ENCODE measurements at regions of chr6 and their contacts with region 1.

Region 1: DNA sequence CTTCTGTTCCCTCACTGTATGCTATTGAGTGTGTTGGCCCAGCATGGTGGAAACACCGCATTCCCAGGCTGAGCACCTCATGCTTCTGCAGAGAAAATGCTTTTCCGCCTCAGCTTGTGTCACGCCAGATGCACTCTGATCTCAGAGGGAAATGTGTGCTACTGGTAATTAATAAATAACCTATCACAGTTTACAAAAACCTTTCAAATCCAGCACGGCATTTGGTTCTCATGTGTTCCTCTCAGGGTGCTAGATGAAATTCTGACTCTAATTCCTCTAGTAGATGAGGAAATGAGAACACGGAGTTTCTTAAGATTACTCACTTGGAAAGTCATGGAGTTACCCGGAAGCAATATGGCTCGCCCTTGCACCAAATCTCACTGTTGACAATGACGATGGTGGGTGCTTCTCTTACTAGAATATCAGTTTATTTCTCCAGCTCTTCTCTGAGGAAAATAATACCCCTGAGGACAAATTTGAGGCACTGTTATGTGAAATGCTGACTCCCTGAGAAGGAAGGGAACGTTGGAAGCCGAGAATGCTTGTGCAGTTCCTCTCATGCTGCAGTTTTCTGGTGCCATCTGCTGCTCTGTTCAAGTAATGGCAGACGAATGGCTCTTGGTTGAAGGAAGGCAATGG is 116.6 kb downstream of the RNF144B start:
- DNase-seq: peak in 24 of 35 experiments; percentile 1 to 64 (median 11)
- ATAC-seq: peak in 1 of 4 experiments; percentile 43
- H3K4me3 ChIP-seq: no peak overlapping the region
- H3K4me3 Mint-ChIP-seq: no peak overlapping the region
- H3K27ac ChIP-seq: no peak overlapping the region
- H3K27ac Mint-ChIP-seq: no peak overlapping the region
- H3K4me1 ChIP-seq: no peaks in the 10 kb centered on the region
- H3K4me1 Mint-ChIP-seq: peaks cover 0 to 3% (median 0%) of the 10 kb centered on the region in 3 donors
- H3K27me3 ChIP-seq: peaks cover 0 to 5% of the 10 kb centered on the region in 2 experiments
- H3K27me3 Mint-ChIP-seq: peaks cover 0 to 2% of the 10 kb centered on the region in 2 donors

Region 2: GRCh38 chr6:18323935-18324705 is 179.6 kb before region 1 on chr6:
- CTCF ChIA-PET with region 1: interaction called, 18 to 25 read pairs
- POLR2A ChIA-PET with region 1: no interaction called
- DNase-seq: peak in 7 of 35 experiments; percentile 1 to 62 (median 6)
- ATAC-seq: peak in 3 of 4 experiments; percentile 41 to 52 (median 42)
- H3K4me3 ChIP-seq: no peak overlapping the region
- H3K4me3 Mint-ChIP-seq: no peak overlapping the region
- H3K27ac ChIP-seq: no peak overlapping the region
- H3K27ac Mint-ChIP-seq: no peak overlapping the region
- H3K4me1 ChIP-seq: no peaks in the 10 kb centered on the region
- H3K4me1 Mint-ChIP-seq: peaks cover 0 to 6% (median 0%) of the 10 kb centered on the region in 3 donors
- H3K27me3 ChIP-seq: peaks cover 0 to 4% of the 10 kb centered on the region in 2 experiments
- H3K27me3 Mint-ChIP-seq: peaks cover 2 to 3% of the 10 kb centered on the region in 2 donors

Measured in T-cell (primary cell).